ENCODE measurements at regions of chr18 and their contacts with region 1.

Region 1: GRCh38 chr18:62982600-62983251 is 267.4 kb downstream of the PHLPP1 start:
- H3K4me3 Mint-ChIP-seq: peak overlapping the region; percentile 78
- H3K27ac Mint-ChIP-seq: peak overlapping the region; percentile 10
- H3K4me1 Mint-ChIP-seq: peaks cover 40% of the 10 kb centered on the region
- H3K27me3 Mint-ChIP-seq: no peaks in the 10 kb centered on the region

Region 2: GRCh38 chr18:62486304-62486964 is 496.3 kb before region 1 on chr18:
- intact Hi-C with region 1: no loop called
- H3K4me3 Mint-ChIP-seq: no peak overlapping the region
- H3K27ac Mint-ChIP-seq: no peak overlapping the region
- H3K4me1 Mint-ChIP-seq: no peaks in the 10 kb centered on the region
- H3K27me3 Mint-ChIP-seq: peaks cover 7% of the 10 kb centered on the region

Region 3: GRCh38 chr18:62584241-62585120 is 398.2 kb before region 1 on chr18:
- intact Hi-C with region 1: loop called (anchors 1 kb)
- H3K4me3 Mint-ChIP-seq: peak overlapping the region; percentile 40
- H3K27ac Mint-ChIP-seq: peak overlapping the region; percentile 68
- H3K4me1 Mint-ChIP-seq: peaks cover 44% of the 10 kb centered on the region
- H3K27me3 Mint-ChIP-seq: peaks cover 2% of the 10 kb centered on the region

Region 4: DNA sequence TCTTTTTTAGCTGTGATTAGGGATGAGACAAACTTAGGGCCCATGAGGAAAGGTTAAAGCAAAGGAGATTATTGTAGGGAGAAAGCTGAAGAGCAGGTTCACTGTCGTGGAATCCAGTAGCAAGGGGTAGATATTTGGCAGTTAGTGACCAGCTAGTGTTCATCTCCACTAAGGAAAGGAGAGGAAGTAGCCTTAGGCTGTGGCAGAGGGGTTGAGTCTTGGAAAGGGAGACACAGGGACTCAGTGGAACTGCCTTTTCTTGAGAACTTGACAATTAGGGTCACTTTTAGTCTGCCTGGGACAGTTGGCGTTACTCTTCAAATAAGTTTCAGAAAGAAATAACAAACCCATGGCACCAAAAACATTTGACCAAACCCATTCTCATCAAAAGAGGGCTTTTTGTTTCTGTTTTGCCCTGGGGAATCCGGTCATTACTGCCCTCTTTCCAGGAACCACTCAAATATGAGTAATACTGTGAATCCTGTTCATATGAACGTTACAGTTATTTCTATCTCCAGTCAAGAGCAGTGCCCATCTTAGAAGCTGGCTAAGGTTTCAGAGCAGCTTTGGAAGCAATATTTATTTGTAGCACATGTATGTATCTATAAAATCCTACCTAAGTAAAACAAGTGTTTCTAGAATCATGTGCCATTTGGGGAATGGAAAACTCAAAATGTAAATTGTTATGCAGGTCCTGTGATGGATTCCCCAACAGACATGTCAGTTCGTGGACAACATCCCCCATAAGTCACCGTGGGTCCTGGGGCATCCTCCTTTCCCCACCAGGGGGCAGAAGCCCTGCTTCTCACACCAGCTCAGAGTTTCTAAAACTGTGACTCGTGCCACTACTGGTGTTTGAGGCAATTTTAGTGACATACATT is 344.7 kb before region 1 on chr18:
- intact Hi-C with region 1: loop called (anchors 2 kb)
- H3K4me3 Mint-ChIP-seq: no peak overlapping the region
- H3K27ac Mint-ChIP-seq: no peak overlapping the region
- H3K4me1 Mint-ChIP-seq: peaks cover 5% of the 10 kb centered on the region
- H3K27me3 Mint-ChIP-seq: peaks cover 2% of the 10 kb centered on the region

Measured in dendritic cell treated with granulocyte-macrophage colony-stimulating factor and Interleukin-4, amounts not matched to agents 40 ng/mL and 50 ng/mL, for 4 days (primary cell).